H1 (cell line): ENCODE measurements at regions of chr16 and their contacts with region 1.

Region 1: GRCh38 chr16:31333686-31334649 is 21.0 kb upstream of the ITGAX start:
- DNase-seq: no peak
- H3K4me3 ChIP-seq: no peak overlapping the region
- H3K27ac ChIP-seq: no peak overlapping the region
- H3K4me1 ChIP-seq: peaks cover 0 to 16% (median 8%) of the 10 kb centered on the region in 4 experiments; a peak in 5 of 7 replicates
- H3K27me3 ChIP-seq: peaks cover 4 to 33% (median 27%) of the 10 kb centered on the region in 4 experiments
- CTCF ChIP-seq: peak; percentile 74 to 85 (median 78)
- EP300 ChIP-seq: no peak
- POLR2A ChIP-seq: no peak
- RAD21 ChIP-seq: peak; percentile 94 to 95

Region 2: GRCh38 chr16:31202414-31203375 is 131.3 kb before region 1 on chr16 and contains the start of gene PYCARD:
- CTCF ChIA-PET with region 1: interaction called, 8 read pairs
- POLR2A ChIA-PET with region 1: interaction called, 23 read pairs
- DNase-seq: peak in 1 of 2 experiments; percentile 79
- H3K4me3 ChIP-seq: peak within 1 kb of the TSS; percentile 61 to 74 (median 72)
- H3K27ac ChIP-seq: no peak within 1 kb of the TSS
- H3K4me1 ChIP-seq: peaks cover 0 to 7% (median 4%) of the 10 kb centered on the region in 4 experiments; a peak in 5 of 7 replicates
- H3K27me3 ChIP-seq: peaks cover 0 to 6% (median 3%) of the 10 kb centered on the region in 4 experiments; a peak in 3 of 7 replicates
- CTCF ChIP-seq: no peak
- EP300 ChIP-seq: no peak
- POLR2A ChIP-seq: peak; percentile 0 to 12; a peak in 2 of 3 replicates
- RAD21 ChIP-seq: no peak
- total RNA-seq, gene PYCARD: 29.9 and 32.2 TPM in 2 replicates